ENCODE measurements at regions of chr11 and their contacts with region 1.

Region 1: GRCh38 chr11:114197799-114198500 is 98.2 kb upstream of the NNMT start:
- DNase-seq: peak; percentile 78 to 92 (median 81)
- ATAC-seq: peak; percentile 77 to 91 (median 84)
- H3K4me3 ChIP-seq: peak overlapping the region in 1 of 12 donors; percentile 3
- H3K27ac ChIP-seq: peak overlapping the region; percentile 76 to 97 (median 90)
- H3K4me1 ChIP-seq: peaks cover 27 to 99% (median 85%) of the 10 kb centered on the region in 12 donors
- H3K27me3 ChIP-seq: no peaks in the 10 kb centered on the region
- CTCF ChIP-seq: peak in 1 of 12 donors; percentile 18
- POLR2A ChIP-seq: peak in 1 of 2 donors; percentile 72

Region 2: GRCh38 chr11:114159802-114160632 is 37.9 kb before region 1 on chr11:
- intact Hi-C with region 1: loop called in 1 of 10 experiments (anchors 5 kb)
- DNase-seq: peak; percentile 98 to 100 (median 99)
- ATAC-seq: peak; percentile 65 to 80 (median 72)
- H3K4me3 ChIP-seq: peak overlapping the region in 11 of 12 donors; percentile 18 to 46 (median 33)
- H3K27ac ChIP-seq: peak overlapping the region; percentile 87 to 100 (median 98)
- H3K4me1 ChIP-seq: peaks cover 54 to 99% (median 90%) of the 10 kb centered on the region in 12 donors
- H3K27me3 ChIP-seq: no peaks in the 10 kb centered on the region
- CTCF ChIP-seq: peak in 1 of 12 donors; percentile 9
- POLR2A ChIP-seq: peak; percentile 33 to 79

Region 3: DNA sequence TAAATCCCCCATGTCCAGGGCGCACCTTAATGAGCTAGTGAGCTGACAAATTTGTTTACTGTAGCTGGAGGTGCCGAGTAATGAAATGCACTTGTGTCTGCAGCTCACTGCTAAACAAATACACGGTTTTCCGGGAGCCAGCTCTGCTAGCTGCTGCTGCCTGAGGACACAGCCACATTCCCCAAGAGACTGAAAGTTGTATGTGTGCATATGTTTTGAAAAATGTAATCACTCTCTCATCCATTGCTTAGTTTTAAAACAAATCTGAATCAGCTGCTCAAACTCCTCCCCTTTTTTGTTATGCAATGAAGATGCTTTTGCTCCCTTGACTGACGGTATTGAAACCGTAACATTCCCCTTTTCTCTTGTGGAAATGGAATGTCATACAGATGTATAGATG is 35.8 kb after region 1 on chr11:
- intact Hi-C with region 1: loop called in 1 of 10 experiments (anchors 5 kb)
- DNase-seq: no peak
- ATAC-seq: no peak
- H3K4me3 ChIP-seq: no peak overlapping the region
- H3K27ac ChIP-seq: no peak overlapping the region
- H3K4me1 ChIP-seq: peaks cover 14 to 95% (median 47%) of the 10 kb centered on the region in 12 donors
- H3K27me3 ChIP-seq: no peaks in the 10 kb centered on the region
- CTCF ChIP-seq: no peak
- POLR2A ChIP-seq: no peak

Region 4: GRCh38 chr11:114243461-114244372 is 45.8 kb after region 1 on chr11:
- intact Hi-C with region 1: loop called in 3 of 10 experiments (anchors 5 to 10 kb)
- DNase-seq: peak in 4 of 5 donors; percentile 66 to 79 (median 73)
- ATAC-seq: peak; percentile 61 to 91 (median 72)
- H3K4me3 ChIP-seq: no peak overlapping the region
- H3K27ac ChIP-seq: peak overlapping the region in 10 of 12 donors; percentile 44 to 87 (median 64)
- H3K4me1 ChIP-seq: peaks cover 0 to 58% (median 30%) of the 10 kb centered on the region in 12 donors
- H3K27me3 ChIP-seq: no peaks in the 10 kb centered on the region
- CTCF ChIP-seq: no peak
- POLR2A ChIP-seq: no peak

Region 5: GRCh38 chr11:114257621-114258558 is 59.9 kb after region 1 on chr11:
- intact Hi-C with region 1: loop called in 6 of 10 experiments (anchors 5 to 10 kb)
- DNase-seq: peak; percentile 39 to 76 (median 69)
- ATAC-seq: peak; percentile 13 to 68 (median 52)
- H3K4me3 ChIP-seq: peak overlapping the region in 9 of 12 donors; percentile 5 to 39 (median 26)
- H3K27ac ChIP-seq: peak overlapping the region; percentile 47 to 85 (median 75)
- H3K4me1 ChIP-seq: peaks cover 0 to 87% (median 47%) of the 10 kb centered on the region in 12 donors
- H3K27me3 ChIP-seq: no peaks in the 10 kb centered on the region
- CTCF ChIP-seq: peak in 8 of 12 donors; percentile 21 to 55 (median 36)
- POLR2A ChIP-seq: no peak

Measured in heart left ventricle (tissue), 16 donors.